Testis (tissue), 5 donors: ENCODE measurements at regions of chr7 and their contacts with region 1.

Region 1: DNA sequence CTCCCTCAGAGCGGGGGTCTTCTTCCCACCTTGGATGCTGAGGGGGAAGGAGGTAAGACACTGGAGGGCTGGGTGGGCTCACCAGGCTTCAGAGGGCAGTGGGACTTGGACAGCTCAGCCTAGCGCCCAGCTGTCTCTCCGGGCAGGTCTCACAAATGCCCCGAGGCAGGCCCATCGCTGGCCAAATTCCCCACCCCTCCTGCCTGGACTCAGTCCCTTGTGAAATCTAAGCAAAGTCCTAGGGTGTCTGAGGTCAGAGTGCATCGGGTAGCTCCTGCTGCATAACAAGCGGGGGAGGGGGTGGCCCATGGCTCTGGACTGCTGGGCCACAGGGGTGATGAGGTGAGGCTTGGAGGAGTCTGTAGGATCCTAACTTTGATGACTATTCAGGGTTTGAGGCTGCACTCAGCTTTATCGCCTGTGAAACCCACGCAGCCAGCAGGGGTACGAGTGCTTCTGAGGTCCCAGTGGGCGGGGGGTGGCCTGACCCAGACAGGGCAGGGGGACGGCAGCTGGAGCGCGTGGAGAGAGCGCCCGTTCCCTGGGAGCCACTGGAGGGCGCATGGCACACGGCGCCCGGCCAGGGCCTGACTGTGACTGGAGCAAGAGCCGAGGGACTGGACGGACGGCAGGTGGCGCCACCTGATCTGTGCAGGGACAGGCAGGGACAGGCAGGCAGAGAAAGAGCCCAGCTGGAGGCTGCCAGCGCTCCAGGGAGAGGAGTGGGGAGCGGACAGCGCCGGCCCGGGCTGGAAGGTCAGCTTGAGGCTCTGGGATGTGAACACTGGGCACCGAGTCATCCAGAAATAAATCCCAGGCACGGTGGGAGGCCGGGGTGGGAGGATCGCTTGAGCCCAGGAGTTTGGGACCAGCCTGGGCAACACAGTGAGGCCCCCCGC is 10.0 kb downstream of the CYP2W1 start:
- DNase-seq: peak; percentile 96
- H3K4me3 ChIP-seq: no peak overlapping the region
- H3K27ac ChIP-seq: no peak overlapping the region
- H3K4me1 ChIP-seq: peaks cover 25% of the 10 kb centered on the region
- H3K27me3 ChIP-seq: no peaks in the 10 kb centered on the region
- CTCF ChIP-seq: peak; percentile 99
- POLR2A ChIP-seq: no peak

Region 2: DNA sequence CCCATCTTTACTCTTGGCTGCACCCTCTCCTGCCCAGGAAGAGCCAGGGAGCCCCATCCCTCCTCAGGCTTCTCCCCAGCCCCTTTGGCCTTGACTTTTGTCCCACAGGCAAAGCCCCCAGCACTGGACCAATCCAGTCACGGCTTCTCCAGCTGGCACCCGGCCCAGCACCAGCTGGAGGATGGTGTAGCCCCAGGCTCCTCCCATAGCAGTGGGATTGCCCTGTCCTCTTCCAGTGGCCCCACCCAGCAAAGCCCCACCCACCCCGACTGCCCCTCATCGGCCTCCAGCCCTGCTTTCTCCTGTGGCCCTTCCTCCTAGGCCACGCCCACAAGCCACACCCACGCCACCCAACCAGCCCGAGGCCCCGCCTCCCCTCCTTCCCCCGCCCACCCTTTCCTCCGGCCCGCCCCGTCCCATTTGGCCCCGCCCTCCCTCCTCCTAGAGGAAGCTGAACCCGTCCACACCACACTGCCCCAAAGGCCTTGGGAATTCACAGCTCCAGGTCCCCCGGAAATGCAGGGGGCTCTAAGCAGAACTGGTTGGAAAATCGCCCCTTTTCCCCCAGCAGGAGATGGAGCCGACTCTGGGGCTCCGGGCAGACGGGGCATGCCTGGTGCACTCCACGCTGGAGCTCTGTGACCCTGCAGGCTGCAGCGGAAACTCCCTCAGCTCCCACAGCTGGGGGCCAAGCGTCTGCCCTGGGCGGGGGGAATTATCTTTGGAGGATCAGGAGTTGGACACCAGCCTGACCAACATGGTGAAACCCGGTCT is 91.4 kb before region 1 on chr7:
- intact Hi-C with region 1: no loop called
- DNase-seq: peak; percentile 80
- H3K4me3 ChIP-seq: no peak overlapping the region
- H3K27ac ChIP-seq: no peak overlapping the region
- H3K4me1 ChIP-seq: no peaks in the 10 kb centered on the region
- H3K27me3 ChIP-seq: no peaks in the 10 kb centered on the region
- CTCF ChIP-seq: no peak
- POLR2A ChIP-seq: no peak

Region 3: DNA sequence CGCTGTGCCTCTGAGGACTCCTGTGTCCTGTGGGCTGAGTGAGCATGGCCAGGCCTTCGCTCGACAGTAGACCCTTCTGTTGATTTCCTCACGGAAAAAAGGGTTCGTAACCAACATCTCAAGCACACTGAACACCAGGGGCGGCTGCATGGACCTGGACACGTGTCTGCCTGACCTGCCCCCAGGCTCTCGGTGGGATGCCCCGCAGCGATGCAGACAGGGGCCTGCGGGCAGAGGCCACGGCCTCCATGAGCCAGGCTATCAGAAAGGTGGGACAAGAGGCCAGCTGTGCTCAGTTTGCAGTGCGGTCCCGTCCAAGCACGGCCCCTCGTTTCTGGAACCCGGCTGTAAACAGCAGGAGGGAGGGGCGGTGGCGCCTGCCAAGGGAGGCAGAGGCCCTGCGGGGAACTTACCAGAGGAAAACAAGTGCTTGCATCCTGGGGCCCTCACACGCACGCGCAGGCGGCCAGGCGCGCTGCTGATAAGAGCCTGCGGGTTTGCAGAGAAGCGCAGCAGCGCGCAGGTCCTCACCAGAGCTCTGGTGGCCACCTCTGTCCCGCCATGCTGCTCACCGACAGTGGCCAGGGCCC is 62.0 kb after region 1 on chr7:
- intact Hi-C with region 1: no loop called
- DNase-seq: peak; percentile 82
- H3K4me3 ChIP-seq: no peak overlapping the region
- H3K27ac ChIP-seq: peak overlapping the region; percentile 54 to 63
- H3K4me1 ChIP-seq: peaks cover 29% of the 10 kb centered on the region
- H3K27me3 ChIP-seq: no peaks in the 10 kb centered on the region
- CTCF ChIP-seq: no peak
- POLR2A ChIP-seq: no peak

Region 4: DNA sequence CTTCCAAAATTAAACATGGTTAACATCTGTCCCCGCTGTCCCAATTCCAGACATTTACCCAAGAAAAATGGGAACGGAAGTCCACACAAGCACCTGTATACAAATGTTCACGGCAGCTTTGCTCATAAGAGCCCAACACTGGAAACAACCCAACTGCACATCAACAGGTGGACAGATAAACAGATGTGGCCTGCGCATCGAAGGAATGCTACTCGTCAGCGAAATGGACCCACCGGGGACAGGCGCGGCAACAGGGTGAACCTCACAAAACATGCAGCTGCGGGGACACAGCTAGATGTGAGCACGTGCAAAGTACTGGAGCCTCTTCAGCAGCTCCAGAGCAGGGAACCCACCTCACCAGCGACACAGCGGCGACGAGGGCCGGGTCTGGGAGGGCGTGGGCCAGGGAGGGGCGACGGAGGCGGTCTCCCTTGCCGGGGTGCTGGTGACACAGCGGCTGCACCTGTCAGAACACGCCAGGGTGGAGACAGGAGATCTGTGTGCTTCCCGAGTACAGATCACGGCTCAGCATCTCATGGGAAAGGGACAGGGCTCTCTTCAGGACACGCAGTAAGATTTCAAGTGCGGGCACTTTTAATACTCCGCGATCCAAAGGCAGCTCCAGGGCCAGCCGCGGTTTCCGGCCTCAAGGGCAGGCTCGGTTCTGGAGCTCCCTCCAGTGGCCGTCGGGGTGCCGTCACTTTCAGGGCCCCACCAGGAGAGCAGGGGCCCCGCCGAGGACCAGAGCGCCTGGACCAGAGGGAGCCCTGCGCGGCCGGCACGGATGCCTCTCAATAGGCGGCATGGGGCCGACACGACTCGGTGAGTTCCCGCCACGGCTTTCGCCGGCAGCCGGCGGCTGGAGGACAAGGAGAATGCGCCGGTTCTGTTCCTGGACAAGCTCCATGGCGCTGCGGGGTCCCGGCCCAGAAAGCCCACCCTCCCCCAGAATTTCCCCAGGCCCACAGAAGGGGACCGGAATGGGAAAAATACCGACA is 72.6 kb after region 1 on chr7:
- intact Hi-C with region 1: loop called (anchors 2 kb)
- DNase-seq: peak; percentile 87
- H3K4me3 ChIP-seq: no peak overlapping the region
- H3K27ac ChIP-seq: no peak overlapping the region
- H3K4me1 ChIP-seq: peaks cover 7% of the 10 kb centered on the region
- H3K27me3 ChIP-seq: no peaks in the 10 kb centered on the region
- CTCF ChIP-seq: peak; percentile 87 to 93 (median 90)
- POLR2A ChIP-seq: no peak

Region 5: GRCh38 chr7:1086588-1087464 is 93.9 kb after region 1 on chr7:
- intact Hi-C with region 1: no loop called
- DNase-seq: peak; percentile 78
- H3K4me3 ChIP-seq: peak overlapping the region; percentile 40 to 42
- H3K27ac ChIP-seq: peak overlapping the region in 1 of 2 donors; percentile 36
- H3K4me1 ChIP-seq: peaks cover 18% of the 10 kb centered on the region
- H3K27me3 ChIP-seq: no peaks in the 10 kb centered on the region
- CTCF ChIP-seq: peak; percentile 85 to 98 (median 88)
- POLR2A ChIP-seq: no peak

Region 6: GRCh38 chr7:1175967-1176851 is 183.3 kb after region 1 on chr7:
- intact Hi-C with region 1: loop called (anchors 10 kb)
- DNase-seq: peak; percentile 94
- H3K4me3 ChIP-seq: peak overlapping the region; percentile 6 to 35
- H3K27ac ChIP-seq: no peak overlapping the region
- H3K4me1 ChIP-seq: peaks cover 5% of the 10 kb centered on the region
- H3K27me3 ChIP-seq: no peaks in the 10 kb centered on the region
- CTCF ChIP-seq: peak; percentile 77 to 93 (median 92)
- POLR2A ChIP-seq: no peak

Region 7: DNA sequence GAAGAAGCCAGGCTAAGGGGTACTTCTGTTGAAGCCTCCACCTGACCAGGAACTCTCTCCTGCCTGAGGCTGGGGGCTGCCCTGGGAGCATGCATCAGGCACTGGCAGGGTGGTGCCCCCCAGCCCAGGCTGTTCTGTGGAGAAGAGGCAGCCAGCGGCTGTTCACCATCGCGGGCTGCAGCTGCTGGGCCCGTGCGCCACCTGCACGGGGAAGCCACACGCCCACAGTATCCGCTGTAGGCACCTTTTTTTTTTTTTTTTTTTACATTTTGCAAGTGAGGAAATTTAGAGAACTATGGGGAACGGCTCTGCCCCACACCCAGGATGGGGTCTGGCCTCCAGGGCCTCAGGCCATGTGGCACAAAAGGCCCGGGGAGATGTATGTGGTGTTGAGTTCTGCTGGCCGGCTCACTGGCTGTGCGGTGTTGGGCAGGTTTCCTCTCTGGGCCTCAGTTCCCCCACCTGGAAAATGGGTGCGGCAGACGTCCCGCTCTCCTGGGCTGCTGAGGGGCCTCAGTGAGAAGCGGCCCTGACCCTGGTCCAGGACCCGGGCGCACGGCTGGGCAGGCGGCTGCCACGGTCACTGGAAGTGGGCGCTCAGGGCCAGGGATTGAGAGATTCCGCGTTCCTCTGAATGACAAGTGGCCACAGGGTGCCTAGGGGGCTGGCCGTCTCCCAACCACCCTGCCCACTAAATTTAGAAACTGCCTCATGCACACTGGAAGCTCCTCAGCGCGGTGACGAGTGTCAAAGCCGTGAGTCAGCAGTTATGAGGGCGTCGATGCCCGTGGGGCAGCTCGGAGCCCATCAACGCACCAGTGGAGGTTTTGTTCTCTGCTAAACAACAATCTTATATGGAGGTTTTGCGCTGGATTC is 520.1 kb after region 1 on chr7:
- intact Hi-C with region 1: no loop called
- DNase-seq: no peak
- H3K4me3 ChIP-seq: no peak overlapping the region
- H3K27ac ChIP-seq: peak overlapping the region in 1 of 2 donors; percentile 74
- H3K4me1 ChIP-seq: no peaks in the 10 kb centered on the region
- H3K27me3 ChIP-seq: no peaks in the 10 kb centered on the region
- CTCF ChIP-seq: no peak
- POLR2A ChIP-seq: no peak